ENCODE measurements at regions of chr7 and their contacts with region 1.

Region 1: DNA sequence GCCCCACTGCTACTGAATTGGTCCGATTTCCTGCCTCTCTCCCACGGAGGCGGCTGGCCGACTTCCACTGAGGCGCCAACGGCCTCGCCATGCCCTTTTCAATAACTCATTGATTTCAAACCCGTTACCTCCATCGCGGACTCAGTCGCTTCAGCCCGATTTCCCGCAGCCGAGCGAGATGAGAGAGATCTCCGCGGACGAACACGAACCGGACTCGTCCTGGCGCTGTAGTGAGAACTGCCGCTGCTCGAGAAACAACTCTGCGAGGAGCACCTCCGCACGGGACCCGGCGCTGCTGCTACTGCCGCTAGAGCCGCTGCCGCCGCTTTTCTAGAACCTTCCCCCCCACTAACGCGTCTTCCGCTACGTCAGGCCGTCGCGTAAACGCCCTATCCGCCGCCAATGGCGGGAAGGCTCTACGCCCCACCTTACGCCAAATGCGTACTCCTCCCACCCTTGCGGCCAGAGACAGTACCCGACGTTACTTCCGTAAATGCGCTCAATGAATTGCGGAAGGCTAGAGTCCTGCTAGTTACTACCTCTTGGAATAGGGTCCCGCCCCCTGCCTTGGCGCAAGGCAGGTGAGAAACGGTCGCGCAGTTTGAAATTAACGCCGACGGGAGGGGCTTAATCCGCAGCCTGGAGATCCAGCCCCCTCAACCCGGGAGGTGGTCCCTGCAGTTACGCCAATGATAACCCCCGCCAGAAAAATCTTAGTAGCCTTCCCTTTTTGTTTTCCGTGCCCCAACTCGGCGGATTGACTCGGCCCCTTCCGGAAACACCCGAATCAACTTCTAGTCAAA is at the start of gene HNRNPA2B1:
- DNase-seq: peak; percentile 100
- H3K4me3 Mint-ChIP-seq: peak within 1 kb of the TSS; percentile 100
- H3K27ac Mint-ChIP-seq: peak within 1 kb of the TSS; percentile 99
- H3K4me1 Mint-ChIP-seq: peaks cover 51% of the 10 kb centered on the region
- H3K27me3 Mint-ChIP-seq: peaks cover 7% of the 10 kb centered on the region
- total RNA-seq, gene HNRNPA2B1: 862 and 873 TPM in 2 replicates

Region 2: GRCh38 chr7:25857376-25857921 is 343.2 kb before region 1 on chr7:
- intact Hi-C with region 1: loop called (anchors 1 kb)
- DNase-seq: no peak
- H3K4me3 Mint-ChIP-seq: no peak overlapping the region
- H3K27ac Mint-ChIP-seq: no peak overlapping the region
- H3K4me1 Mint-ChIP-seq: peaks cover 38% of the 10 kb centered on the region
- H3K27me3 Mint-ChIP-seq: peaks cover 56% of the 10 kb centered on the region

Region 3: GRCh38 chr7:26187380-26188205 is 13.1 kb before region 1 on chr7:
- intact Hi-C with region 1: loop called (anchors 1 kb)
- DNase-seq: no peak
- H3K4me3 Mint-ChIP-seq: peak overlapping the region; percentile 12
- H3K27ac Mint-ChIP-seq: peak overlapping the region; percentile 85
- H3K4me1 Mint-ChIP-seq: peaks cover 61% of the 10 kb centered on the region
- H3K27me3 Mint-ChIP-seq: no peaks in the 10 kb centered on the region

Measured in activated CD4-positive, alpha-beta T cell treated with anti-CD3 and anti-CD28 coated beads, Interleukin-2, amount 10 ng/mL, durations not matched to agents 24 days and 14 days (primary cell).